SK-N-SH (cell line): ENCODE measurements at regions of chr1 and their contacts with region 1.

Region 1: DNA sequence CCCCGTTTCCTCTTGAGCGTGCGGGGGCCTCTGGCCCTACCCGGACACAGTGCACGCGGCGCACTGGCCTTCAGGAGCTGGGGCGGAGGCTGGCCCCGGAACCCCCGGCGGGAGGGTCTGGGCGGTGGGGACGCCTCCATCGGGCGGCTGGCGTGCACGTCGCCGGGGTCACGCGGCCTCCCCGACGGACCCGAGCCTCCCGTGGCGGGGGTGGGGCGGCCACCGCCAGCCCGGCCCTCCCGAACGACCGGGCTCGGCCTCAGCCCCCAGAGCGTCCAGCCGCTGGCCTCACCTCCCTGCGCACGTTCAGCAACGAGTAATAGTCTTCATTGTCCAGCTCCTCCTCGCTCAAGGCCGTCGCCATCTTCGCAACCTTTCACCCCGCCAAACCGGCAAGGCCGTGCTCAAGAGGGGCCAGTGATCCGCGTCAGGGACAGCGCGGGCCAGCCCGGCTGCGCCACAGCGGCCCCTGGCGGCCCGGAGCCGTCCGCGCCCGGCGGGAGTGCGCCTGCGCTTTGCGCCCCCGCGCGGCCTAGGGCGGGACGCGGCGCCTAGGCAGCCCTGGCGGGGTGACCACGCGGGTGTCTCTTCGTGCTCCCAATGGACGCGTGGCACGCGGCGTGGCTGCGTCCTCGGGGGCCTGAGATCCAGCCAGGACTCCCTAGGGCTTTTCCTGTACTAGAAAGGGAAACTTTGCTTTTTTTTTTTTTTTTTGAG is at the start of gene DNAJC11:
- DNase-seq: peak; percentile 99
- H3K4me3 ChIP-seq: peak within 1 kb of the TSS; percentile 85 to 95
- H3K27ac ChIP-seq: peak within 1 kb of the TSS; percentile 62 to 68; a peak in 2 of 4 replicates
- H3K4me1 ChIP-seq: peaks cover 0 to 11% of the 10 kb centered on the region in 2 experiments; a peak in 1 of 4 replicates
- H3K27me3 ChIP-seq: no peaks in the 10 kb centered on the region
- CTCF ChIP-seq: peak; percentile 64
- EP300 ChIP-seq: no peak
- RAD21 ChIP-seq: peak; percentile 44
- polyA plus RNA-seq, gene DNAJC11: 35.5 and 38.2 TPM in 2 replicates

Region 2: GRCh38 chr1:6464514-6464836 is 237.1 kb before region 1 on chr1:
- CTCF ChIA-PET with region 1: no interaction called
- POLR2A ChIA-PET with region 1: no interaction called
- DNase-seq: no peak
- H3K4me3 ChIP-seq: no peak overlapping the region
- H3K27ac ChIP-seq: no peak overlapping the region
- H3K4me1 ChIP-seq: no peaks in the 10 kb centered on the region
- H3K27me3 ChIP-seq: no peaks in the 10 kb centered on the region
- CTCF ChIP-seq: no peak
- EP300 ChIP-seq: no peak
- RAD21 ChIP-seq: no peak

Region 3: GRCh38 chr1:6672558-6672957 is 29.0 kb before region 1 on chr1:
- CTCF ChIA-PET with region 1: interaction called, 26 read pairs
- POLR2A ChIA-PET with region 1: interaction called, 4 read pairs
- DNase-seq: peak; percentile 84
- H3K4me3 ChIP-seq: no peak overlapping the region
- H3K27ac ChIP-seq: peak overlapping the region; percentile 13 to 96; a peak in 3 of 4 replicates
- H3K4me1 ChIP-seq: peaks cover 0 to 27% of the 10 kb centered on the region in 2 experiments; a peak in 2 of 4 replicates
- H3K27me3 ChIP-seq: no peaks in the 10 kb centered on the region
- CTCF ChIP-seq: no peak
- EP300 ChIP-seq: peak in 1 of 2 experiments; percentile 98; a peak in 2 of 4 replicates
- RAD21 ChIP-seq: peak; percentile 40

Region 4: DNA sequence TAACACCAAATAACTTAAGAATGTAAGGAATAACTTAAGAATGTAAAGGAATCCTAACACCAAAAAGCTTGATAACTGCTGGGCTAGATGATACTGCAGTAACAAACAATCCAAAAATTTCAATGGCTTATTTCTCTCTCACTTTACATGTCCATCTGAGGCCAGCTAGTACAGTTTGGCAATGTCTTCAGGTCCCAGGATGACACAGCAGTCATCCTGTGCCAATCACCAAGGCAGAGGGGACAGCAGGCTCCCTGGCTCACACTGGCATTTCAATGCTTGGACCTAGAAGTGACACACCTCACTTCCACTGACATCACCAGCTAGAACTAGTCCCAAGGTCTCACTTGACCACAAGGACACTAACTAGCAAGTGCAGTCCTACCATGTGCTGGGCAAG is 15.3 kb before region 1 on chr1:
- CTCF ChIA-PET with region 1: interaction called, 20 read pairs
- POLR2A ChIA-PET with region 1: no interaction called
- DNase-seq: no peak
- H3K4me3 ChIP-seq: peak overlapping the region in 1 of 2 experiments; percentile 39; a peak in 1 of 4 replicates
- H3K27ac ChIP-seq: peak overlapping the region in 1 of 2 experiments; percentile 59; a peak in 2 of 4 replicates
- H3K4me1 ChIP-seq: peaks cover 2 to 9% of the 10 kb centered on the region in 2 experiments; a peak in 2 of 4 replicates
- H3K27me3 ChIP-seq: no peaks in the 10 kb centered on the region
- CTCF ChIP-seq: no peak
- EP300 ChIP-seq: no peak
- RAD21 ChIP-seq: no peak

Region 5: DNA sequence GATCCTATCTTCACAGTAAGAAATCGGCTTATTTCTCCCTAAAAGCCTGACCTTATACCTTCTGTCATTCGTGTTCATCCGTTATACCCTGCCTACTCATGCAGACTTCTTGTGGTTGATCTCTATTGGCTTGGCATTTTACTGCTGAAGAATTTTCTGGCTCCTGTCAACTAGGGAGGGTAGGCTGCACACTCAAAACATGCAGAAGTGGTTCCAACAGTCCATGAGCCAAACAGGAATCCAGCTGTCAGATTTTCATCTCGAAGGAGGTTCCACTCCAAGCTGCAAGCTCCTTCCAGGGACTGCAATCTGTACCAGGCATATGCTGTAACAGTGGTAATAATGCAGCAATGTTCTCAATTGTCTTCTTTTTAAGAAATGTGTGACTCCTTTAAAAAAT is 10.1 kb before region 1 on chr1:
- CTCF ChIA-PET with region 1: interaction called, 20 read pairs
- POLR2A ChIA-PET with region 1: no interaction called
- DNase-seq: no peak
- H3K4me3 ChIP-seq: no peak overlapping the region
- H3K27ac ChIP-seq: no peak overlapping the region
- H3K4me1 ChIP-seq: peaks cover under 1 to 5% of the 10 kb centered on the region in 2 experiments; a peak in 1 of 4 replicates
- H3K27me3 ChIP-seq: no peaks in the 10 kb centered on the region
- CTCF ChIP-seq: no peak
- EP300 ChIP-seq: no peak
- RAD21 ChIP-seq: no peak

Region 6: DNA sequence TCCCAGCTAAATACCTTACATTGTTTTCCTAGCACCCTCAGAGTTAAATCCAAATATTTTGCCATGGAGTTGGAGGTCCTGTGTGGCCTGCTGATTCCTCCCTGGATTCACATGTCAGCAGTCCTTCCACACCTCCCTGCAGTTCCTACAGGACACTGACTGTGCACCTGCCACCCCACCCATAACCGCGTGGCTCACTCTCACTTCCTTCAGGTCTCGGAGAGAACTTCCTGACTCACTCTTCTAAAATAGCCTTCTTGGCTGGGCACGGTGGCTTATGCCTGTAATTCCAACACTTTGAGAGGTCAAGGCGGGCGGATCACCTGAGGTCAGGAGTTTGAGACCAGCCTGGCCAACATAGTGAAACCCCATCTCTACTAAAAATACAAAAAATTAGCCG is 75.3 kb after region 1 on chr1:
- CTCF ChIA-PET with region 1: no interaction called
- POLR2A ChIA-PET with region 1: no interaction called
- DNase-seq: no peak
- H3K4me3 ChIP-seq: no peak overlapping the region
- H3K27ac ChIP-seq: no peak overlapping the region
- H3K4me1 ChIP-seq: 0 out of 4 replicates have a peak, but pooled peaks cover 0 to 2% of the 10 kb centered on the region in 2 experiments
- H3K27me3 ChIP-seq: no peaks in the 10 kb centered on the region
- CTCF ChIP-seq: no peak
- EP300 ChIP-seq: no peak
- RAD21 ChIP-seq: no peak

Region 7: DNA sequence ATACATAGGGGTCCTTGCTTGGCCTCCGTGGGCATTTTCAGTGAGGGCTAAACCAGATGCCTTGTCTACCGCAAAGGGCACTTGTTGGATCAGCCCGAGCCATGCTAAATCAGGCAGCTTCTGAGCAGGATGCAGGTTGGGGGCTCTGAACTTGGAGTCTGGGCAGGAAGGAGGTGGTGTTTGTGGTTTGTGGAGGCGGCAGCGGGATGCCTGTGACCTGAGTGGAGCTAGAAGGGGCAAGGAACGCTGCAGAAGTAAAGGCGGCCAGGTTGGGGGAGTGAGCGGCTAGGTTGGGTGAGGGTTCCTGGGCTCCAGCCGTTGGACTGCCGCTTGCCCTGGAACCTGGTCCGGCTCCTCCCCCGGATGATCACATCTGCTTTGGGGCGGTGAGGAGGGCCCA is 267.5 kb after region 1 on chr1:
- CTCF ChIA-PET with region 1: no interaction called
- POLR2A ChIA-PET with region 1: no interaction called
- DNase-seq: peak; percentile 11
- H3K4me3 ChIP-seq: no peak overlapping the region
- H3K27ac ChIP-seq: no peak overlapping the region
- H3K4me1 ChIP-seq: peaks cover 0 to 14% of the 10 kb centered on the region in 2 experiments; a peak in 1 of 4 replicates
- H3K27me3 ChIP-seq: no peaks in the 10 kb centered on the region
- CTCF ChIP-seq: no peak
- EP300 ChIP-seq: no peak
- RAD21 ChIP-seq: no peak